ENCODE measurements at regions of chr1 and their contacts with region 1.

Region 1: DNA sequence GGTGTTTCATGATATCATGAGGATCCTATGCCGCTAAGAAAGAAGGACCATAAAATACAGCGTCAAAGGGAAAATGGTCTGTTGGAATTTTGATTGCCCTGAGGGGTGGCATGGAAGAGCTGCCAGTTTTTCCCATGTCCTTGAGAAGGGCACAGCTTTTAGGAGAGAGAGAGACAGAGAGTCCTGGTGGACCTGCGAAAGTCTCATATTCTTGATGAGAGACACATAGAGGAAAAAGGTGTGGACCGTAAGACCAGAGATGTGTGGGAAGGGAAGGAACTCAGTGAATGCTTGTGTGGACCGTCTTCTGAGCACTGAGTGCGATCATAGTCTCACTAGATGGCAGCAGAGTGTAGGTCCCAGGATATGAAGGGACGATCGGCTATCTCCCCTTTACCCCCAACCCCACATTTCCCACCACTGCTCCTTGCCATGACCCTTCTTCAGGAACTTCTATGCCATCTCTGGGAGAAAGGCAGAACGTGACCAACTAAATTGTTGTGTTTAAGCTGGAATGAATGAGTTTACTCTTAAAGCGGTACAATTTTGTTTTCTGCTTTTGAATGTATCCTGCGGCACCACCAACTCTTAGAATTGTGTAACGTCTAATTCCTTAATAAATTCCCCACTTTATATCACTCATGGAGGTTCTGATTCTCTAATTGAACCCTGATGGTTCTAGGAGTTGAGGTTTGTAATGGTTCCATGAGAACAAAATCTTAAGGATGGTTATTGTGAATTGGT is 117.7 kb downstream of the CTH start:
- DNase-seq: no peak
- ATAC-seq: peak; percentile 61 to 73

Region 2: GRCh38 chr1:69871412-69871811 is 657.4 kb before region 1 on chr1:
- intact Hi-C with region 1: no loop called
- DNase-seq: no peak
- ATAC-seq: no peak

Region 3: DNA sequence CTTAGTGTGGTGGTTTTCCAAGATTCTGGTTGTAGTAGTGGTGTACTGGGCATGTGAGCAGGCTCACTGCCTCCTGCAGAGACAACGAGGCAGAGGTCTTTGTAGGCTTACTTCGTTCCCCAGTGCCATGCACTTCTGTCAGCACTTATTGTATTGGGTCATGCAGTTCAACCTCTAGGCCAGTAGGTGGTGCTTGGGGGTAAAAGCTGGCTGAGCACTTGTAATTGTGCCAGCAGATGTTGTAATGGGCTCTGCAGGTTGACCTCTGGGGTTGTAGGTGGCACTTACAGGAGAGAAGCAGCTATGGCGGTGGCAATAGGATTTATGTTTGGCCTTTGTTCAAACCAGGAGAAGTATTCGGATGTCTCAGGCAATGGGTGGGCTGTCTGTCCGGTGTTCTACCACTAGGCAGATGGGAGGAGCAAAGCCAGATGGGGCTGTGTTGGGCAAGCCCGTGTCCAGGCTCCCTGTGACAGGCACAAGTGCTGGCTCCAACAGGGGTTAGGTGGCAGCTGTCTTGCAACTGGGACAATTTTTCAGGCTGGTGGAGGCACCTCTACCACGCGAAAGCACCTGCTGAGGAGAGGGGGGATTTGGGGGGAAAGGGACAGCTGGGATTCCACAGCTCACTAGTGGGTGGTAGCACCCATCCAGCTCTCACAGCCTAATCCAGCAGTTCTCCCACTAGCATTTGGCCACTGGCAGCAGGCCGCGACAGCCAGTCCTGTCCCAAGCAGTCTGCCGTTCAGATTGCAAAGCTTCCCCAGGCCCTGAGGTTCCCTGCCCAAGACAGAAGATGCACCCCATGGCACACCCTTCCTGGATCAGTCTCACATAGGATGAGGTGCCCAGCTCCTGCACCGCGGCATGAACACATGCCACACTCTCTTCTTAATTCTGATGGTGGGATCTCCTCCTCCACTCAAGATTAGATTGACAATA is 156.8 kb after region 1 on chr1:
- intact Hi-C with region 1: loop called in 1 of 2 experiments (anchors 10 kb)
- DNase-seq: peak; percentile 55
- ATAC-seq: peak; percentile 79 to 83

Region 4: DNA sequence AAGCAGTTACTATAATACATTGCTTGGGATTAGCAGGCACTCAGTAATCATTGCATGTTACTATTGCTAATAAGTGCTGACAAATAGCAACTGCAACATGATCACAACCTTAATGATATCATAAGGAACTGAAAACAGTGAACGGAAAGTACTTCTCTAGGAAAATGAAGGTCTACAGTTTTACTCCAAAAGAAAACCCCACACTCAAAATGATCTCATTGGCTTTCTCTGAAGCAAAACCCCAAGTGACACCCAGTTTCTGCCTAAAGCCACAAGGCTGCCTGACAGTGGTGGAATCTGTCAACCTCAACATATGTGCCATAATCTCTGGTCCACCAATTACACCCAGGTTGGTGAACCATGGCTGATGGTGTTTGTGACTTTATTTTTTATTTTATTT is 381.3 kb after region 1 on chr1:
- intact Hi-C with region 1: no loop called
- DNase-seq: no peak
- ATAC-seq: no peak

Measured in left cardiac atrium (tissue), 4 donors.